T-cell (primary cell): ENCODE measurements at regions of chr1 and their contacts with region 1.

Region 1: DNA sequence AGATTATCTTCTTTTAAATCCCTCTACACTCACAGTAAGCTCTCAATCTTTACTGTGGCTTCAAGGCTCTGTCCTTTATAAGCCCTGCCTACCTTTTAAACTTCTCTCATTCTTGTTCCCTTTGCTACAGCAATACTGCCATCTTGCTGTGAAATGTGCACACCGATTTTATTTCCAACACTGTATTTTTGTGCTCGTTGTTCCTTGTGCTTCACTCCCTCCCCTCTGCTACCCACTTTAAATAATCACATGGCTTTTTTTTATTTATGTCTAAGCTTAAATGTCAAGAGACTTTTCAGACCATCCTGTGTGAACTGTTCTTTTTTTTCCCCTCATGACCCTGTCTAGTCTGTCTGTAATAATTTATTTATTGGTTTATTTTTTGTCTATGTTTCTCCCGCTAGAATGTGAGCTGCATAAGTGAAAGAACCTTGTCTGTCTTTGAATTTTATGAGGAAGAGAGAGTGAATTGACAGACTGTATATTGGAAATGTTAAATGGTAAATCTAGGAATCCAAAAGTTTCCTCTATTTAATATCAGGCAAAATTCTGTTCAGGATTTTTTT is 45.7 kb downstream of the ABCD3 start:
- DNase-seq: peak in 7 of 35 experiments; percentile 0 to 58 (median 2)
- ATAC-seq: peak in 2 of 4 experiments; percentile 42 to 53
- H3K4me3 ChIP-seq: no peak overlapping the region
- H3K4me3 Mint-ChIP-seq: no peak overlapping the region
- H3K27ac ChIP-seq: no peak overlapping the region
- H3K27ac Mint-ChIP-seq: no peak overlapping the region
- H3K4me1 ChIP-seq: no peaks in the 10 kb centered on the region
- H3K4me1 Mint-ChIP-seq: peaks cover 2 to 10% (median 7%) of the 10 kb centered on the region in 3 donors
- H3K27me3 ChIP-seq: no peaks in the 10 kb centered on the region
- H3K27me3 Mint-ChIP-seq: no peaks in the 10 kb centered on the region

Region 2: DNA sequence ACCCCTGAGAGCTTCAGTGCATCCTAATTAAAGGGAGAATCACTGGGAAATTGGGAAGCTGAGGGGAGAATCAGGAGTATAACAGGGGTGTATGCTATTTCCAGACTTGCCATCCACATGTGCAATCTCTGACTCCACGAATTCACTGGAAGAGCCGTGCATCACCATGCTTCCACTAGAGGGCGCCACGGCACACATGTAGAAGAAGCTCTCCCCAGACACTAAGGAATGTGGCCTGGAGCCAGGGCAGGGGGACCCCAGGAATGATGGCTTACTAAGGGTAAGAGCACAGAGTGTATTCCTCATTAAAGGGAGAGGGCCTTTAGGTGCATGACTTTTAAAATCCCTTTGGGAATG is 424.4 kb before region 1 on chr1:
- CTCF ChIA-PET with region 1: interaction called, 4 to 10 read pairs
- POLR2A ChIA-PET with region 1: no interaction called
- DNase-seq: peak in 26 of 35 experiments; percentile 7 to 70 (median 38)
- ATAC-seq: no peak
- H3K4me3 ChIP-seq: no peak overlapping the region
- H3K4me3 Mint-ChIP-seq: no peak overlapping the region
- H3K27ac ChIP-seq: no peak overlapping the region
- H3K27ac Mint-ChIP-seq: no peak overlapping the region
- H3K4me1 ChIP-seq: no peaks in the 10 kb centered on the region
- H3K4me1 Mint-ChIP-seq: peaks cover 0 to 4% (median 2%) of the 10 kb centered on the region in 3 donors
- H3K27me3 ChIP-seq: peaks cover 0 to 16% of the 10 kb centered on the region in 2 experiments
- H3K27me3 Mint-ChIP-seq: peaks cover 50 to 53% of the 10 kb centered on the region in 2 donors

Region 3: GRCh38 chr1:94061513-94062443 is 402.1 kb before region 1 on chr1:
- CTCF ChIA-PET with region 1: interaction called, 5 to 19 read pairs
- POLR2A ChIA-PET with region 1: no interaction called
- DNase-seq: peak in 15 of 35 experiments; percentile 4 to 47 (median 11)
- ATAC-seq: peak in 3 of 4 experiments; percentile 38 to 49 (median 48)
- H3K4me3 ChIP-seq: no peak overlapping the region
- H3K4me3 Mint-ChIP-seq: no peak overlapping the region
- H3K27ac ChIP-seq: no peak overlapping the region
- H3K27ac Mint-ChIP-seq: no peak overlapping the region
- H3K4me1 ChIP-seq: no peaks in the 10 kb centered on the region
- H3K4me1 Mint-ChIP-seq: no peaks in the 10 kb centered on the region
- H3K27me3 ChIP-seq: no peaks in the 10 kb centered on the region
- H3K27me3 Mint-ChIP-seq: peaks cover 8 to 24% of the 10 kb centered on the region in 2 donors

Region 4: GRCh38 chr1:94621392-94621791 is 157.5 kb after region 1 on chr1:
- CTCF ChIA-PET with region 1: no interaction called
- POLR2A ChIA-PET with region 1: no interaction called
- DNase-seq: no peak
- ATAC-seq: no peak
- H3K4me3 ChIP-seq: no peak overlapping the region
- H3K4me3 Mint-ChIP-seq: no peak overlapping the region
- H3K27ac ChIP-seq: no peak overlapping the region
- H3K27ac Mint-ChIP-seq: no peak overlapping the region
- H3K4me1 ChIP-seq: no peaks in the 10 kb centered on the region
- H3K4me1 Mint-ChIP-seq: no peaks in the 10 kb centered on the region
- H3K27me3 ChIP-seq: peaks cover 0 to 13% of the 10 kb centered on the region in 2 experiments
- H3K27me3 Mint-ChIP-seq: peaks cover 0 to 5% of the 10 kb centered on the region in 2 donors